MCF 10A (cell line): ENCODE measurements at regions of chr15 and their contacts with region 1.

Region 1: DNA sequence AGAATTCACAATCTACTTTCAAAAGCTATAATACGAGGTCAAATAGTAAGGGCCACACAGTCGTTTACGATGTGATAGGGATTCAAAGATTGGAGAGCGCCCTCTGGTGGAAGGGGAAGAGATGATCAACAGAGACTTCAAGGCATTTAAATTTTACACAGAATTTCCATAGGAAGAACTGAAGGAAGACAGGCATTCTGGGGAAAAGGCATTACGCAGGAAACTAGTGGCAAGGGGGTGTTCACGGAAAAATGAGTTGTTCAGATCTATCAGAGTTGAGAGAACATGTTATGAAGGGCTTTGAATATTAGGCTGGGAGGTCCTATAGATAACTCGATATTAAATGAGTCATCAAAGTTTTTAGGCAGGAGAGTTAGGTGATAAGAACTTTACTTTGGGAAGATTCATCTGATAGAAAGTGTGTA is 128.7 kb downstream of the FRMD5 start:
- DNase-seq: peak; percentile 93
- H3K4me3 Mint-ChIP-seq: no peak overlapping the region
- H3K27ac Mint-ChIP-seq: no peak overlapping the region
- H3K4me1 Mint-ChIP-seq: peaks cover 6% of the 10 kb centered on the region
- H3K27me3 Mint-ChIP-seq: no peaks in the 10 kb centered on the region
- CTCF ChIP-seq: peak; percentile 65

Region 2: DNA sequence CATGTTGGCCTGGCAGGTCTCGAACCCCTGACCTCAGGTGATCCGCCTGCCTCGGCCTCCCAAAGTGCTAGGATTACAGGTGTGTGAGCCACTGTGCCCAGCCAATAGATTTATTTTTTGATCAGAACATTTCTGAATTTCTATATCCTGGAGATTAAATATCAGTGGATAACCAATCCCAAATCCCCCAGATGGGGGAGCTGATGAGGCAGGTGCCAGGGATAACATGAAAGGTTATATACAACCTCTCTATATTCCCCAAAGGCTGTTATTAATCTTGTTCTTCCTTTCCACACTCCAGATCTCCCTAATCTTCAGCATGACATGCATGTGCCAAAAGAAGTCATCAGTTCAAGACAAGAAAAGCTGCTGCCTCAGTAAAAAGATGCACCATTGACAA is 127.3 kb before region 1 on chr15:
- CTCF ChIA-PET with region 1: interaction called, 5 read pairs
- POLR2A ChIA-PET with region 1: no interaction called
- intact Hi-C with region 1: loop called (anchors 1 kb)
- DNase-seq: peak; percentile 47
- H3K4me3 Mint-ChIP-seq: no peak overlapping the region
- H3K27ac Mint-ChIP-seq: no peak overlapping the region
- H3K4me1 Mint-ChIP-seq: no peaks in the 10 kb centered on the region
- H3K27me3 Mint-ChIP-seq: no peaks in the 10 kb centered on the region
- CTCF ChIP-seq: peak; percentile 68

Region 3: DNA sequence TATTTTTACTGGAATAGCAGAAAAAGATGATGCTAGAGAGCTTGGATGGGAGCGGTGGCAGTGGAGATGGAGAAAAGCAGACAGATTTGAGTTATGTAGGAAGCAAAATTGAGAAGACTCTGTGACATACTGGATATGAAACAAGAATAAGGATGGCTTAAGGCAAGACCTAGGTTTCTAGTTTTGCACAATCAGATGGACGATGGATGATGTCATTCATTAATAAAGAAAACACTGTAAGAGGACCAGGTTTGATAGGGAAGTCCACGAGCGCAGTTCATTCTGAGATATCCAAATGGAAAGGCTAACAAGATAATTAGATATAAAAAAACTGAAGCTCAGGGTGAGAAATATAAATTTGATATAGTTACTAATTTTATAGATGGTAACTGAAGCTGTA is 12.9 kb before region 1 on chr15:
- CTCF ChIA-PET with region 1: interaction called, 13 read pairs
- POLR2A ChIA-PET with region 1: interaction called, 4 read pairs
- intact Hi-C with region 1: no loop called
- DNase-seq: no peak
- H3K4me3 Mint-ChIP-seq: no peak overlapping the region
- H3K27ac Mint-ChIP-seq: no peak overlapping the region
- H3K4me1 Mint-ChIP-seq: no peaks in the 10 kb centered on the region
- H3K27me3 Mint-ChIP-seq: no peaks in the 10 kb centered on the region
- CTCF ChIP-seq: no peak

Region 4: DNA sequence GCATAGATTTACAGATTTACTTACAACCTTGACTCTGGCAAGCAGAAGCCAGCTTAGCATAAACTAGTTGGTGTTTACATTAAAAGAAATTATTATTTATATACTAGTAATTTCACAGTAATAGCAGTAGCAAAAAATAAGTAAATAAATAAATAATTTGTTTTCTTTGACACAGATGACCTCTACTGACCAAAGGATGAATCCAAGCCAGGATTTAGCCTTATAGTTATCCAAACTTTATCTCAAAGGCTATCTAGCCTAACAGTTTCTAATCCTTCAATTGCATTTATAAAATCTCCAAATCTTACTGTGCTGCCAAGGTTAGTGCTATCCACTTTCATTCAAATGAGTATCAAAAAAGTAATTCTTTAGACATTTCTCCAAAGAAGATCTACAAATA is 64.5 kb after region 1 on chr15:
- CTCF ChIA-PET with region 1: no interaction called
- POLR2A ChIA-PET with region 1: no interaction called
- intact Hi-C with region 1: loop called (anchors 2 kb)
- DNase-seq: peak; percentile 8
- H3K4me3 Mint-ChIP-seq: no peak overlapping the region
- H3K27ac Mint-ChIP-seq: no peak overlapping the region
- H3K4me1 Mint-ChIP-seq: no peaks in the 10 kb centered on the region
- H3K27me3 Mint-ChIP-seq: no peaks in the 10 kb centered on the region
- CTCF ChIP-seq: peak; percentile 58

Region 5: DNA sequence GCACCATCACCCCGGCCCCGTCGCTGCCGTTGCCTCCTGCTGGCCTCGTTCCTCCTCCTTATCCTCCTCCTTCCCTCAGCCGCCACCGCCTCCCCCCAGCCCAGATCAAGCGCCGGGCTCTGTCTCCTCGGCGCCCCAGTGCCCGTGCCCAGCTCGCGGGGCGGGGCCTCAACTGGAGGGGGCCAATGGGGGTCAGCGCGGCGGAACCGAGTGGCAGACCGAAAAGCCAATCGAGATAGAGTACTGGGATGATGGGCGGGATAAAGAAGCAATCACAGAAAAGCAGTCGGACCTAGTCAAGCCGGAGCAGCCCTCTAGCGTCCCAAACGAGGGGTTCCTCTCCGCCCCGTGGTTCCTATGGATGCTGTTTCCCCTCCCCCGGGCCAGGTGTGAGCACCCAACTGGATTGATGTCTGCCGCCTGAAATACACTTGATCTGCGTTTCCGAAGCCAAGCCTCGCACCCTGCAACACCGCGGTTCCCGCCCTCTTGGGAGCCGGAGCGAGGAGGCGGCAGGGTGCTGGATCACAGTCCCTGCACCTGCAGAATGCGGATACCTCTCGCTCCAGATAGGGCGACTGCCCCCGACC is 128.9 kb after region 1 on chr15 and contains the start of gene FRMD5:
- CTCF ChIA-PET with region 1: interaction called, 4 read pairs
- POLR2A ChIA-PET with region 1: no interaction called
- intact Hi-C with region 1: loop called (anchors 10 kb)
- DNase-seq: peak; percentile 95
- H3K4me3 Mint-ChIP-seq: peak within 1 kb of the TSS; percentile 72
- H3K27ac Mint-ChIP-seq: no peak within 1 kb of the TSS
- H3K4me1 Mint-ChIP-seq: peaks cover 10% of the 10 kb centered on the region
- H3K27me3 Mint-ChIP-seq: no peaks in the 10 kb centered on the region
- CTCF ChIP-seq: peak; percentile 37
- total RNA-seq, gene FRMD5: 0.71 and 0.98 TPM in 2 replicates

Region 6: DNA sequence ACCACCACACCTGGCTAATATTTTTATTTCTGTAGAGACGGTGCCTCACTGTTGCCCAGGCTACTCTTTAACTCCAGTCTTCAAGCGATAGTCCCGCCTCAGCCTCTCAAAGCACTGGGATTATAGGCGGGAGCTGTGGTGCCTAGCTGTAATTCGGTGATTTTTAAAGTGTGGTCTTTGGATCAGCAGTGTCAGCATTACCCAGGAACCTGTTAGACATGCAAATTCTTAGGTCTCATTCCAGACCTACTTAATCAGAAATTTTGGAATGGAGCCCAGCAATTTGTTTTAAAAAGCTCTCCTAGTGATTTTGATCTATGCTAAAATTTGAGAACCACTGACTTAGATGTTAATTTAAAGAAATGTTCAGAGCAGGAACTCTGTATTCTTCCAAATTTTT is 274.1 kb after region 1 on chr15:
- CTCF ChIA-PET with region 1: no interaction called
- POLR2A ChIA-PET with region 1: no interaction called
- intact Hi-C with region 1: no loop called
- DNase-seq: peak; percentile 69
- H3K4me3 Mint-ChIP-seq: peak overlapping the region; percentile 46
- H3K27ac Mint-ChIP-seq: peak overlapping the region; percentile 85
- H3K4me1 Mint-ChIP-seq: peaks cover 8% of the 10 kb centered on the region
- H3K27me3 Mint-ChIP-seq: no peaks in the 10 kb centered on the region
- CTCF ChIP-seq: no peak